ENCODE measurements at regions of chr13 and their contacts with region 1.

Region 1: DNA sequence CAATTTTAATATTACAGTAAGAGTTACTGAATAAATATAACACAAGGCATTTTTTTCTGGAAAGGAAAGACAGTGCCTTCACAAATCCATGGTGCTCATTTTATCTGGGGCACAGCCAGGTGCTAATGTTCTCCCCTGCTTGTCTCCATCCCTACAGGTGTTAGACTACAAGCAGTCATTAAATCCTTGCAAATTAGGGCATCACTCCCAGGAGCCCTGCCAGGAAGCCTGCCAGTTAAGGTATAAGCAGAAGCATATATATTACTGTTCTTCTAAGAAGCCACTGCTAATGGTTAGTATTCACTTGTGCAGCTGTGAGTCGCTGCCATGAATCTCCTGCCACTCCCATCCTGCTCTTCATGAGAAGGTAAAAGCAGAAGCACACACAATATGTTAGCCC is 149.7 kb downstream of the OXGR1 start:
- DNase-seq: no peak
- ATAC-seq: no peak
- H3K4me3 ChIP-seq: no peak overlapping the region
- H3K27ac ChIP-seq: no peak overlapping the region
- H3K4me1 ChIP-seq: no peaks in the 10 kb centered on the region
- H3K27me3 ChIP-seq: peaks cover 4% of the 10 kb centered on the region; the same call in 1 of the 2 replicates
- CTCF ChIP-seq: no peak

Region 2: DNA sequence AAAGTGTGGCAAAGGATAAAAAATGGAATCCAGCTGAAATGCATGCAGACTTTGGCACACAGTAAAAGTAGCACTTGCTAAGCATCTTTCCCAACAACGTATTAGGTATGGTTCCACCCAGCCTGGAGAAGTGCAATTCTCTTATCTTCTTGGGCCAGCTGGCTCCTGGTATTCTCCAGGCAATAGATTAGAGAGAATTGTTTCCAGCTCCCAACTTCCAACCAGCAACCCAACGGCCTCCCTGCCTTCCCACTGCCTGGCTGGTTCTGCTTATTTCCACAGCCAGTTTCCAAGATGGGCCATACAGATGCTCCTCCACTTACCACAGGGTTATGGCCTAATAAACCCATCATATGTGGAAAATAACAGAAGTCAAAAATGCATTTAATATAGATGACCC is 16.3 kb after region 1 on chr13:
- CTCF ChIA-PET with region 1: no interaction called
- POLR2A ChIA-PET with region 1: interaction called, 15 read pairs
- intact Hi-C with region 1: no loop called
- DNase-seq: no peak
- ATAC-seq: no peak
- H3K4me3 ChIP-seq: no peak overlapping the region
- H3K27ac ChIP-seq: no peak overlapping the region
- H3K4me1 ChIP-seq: no peaks in the 10 kb centered on the region
- H3K27me3 ChIP-seq: peaks cover 19% of the 10 kb centered on the region
- CTCF ChIP-seq: no peak

Region 3: GRCh38 chr13:97082461-97083207 is 238.0 kb after region 1 on chr13:
- CTCF ChIA-PET with region 1: no interaction called
- POLR2A ChIA-PET with region 1: no interaction called
- intact Hi-C with region 1: no loop called
- DNase-seq: no peak
- ATAC-seq: no peak
- H3K4me3 ChIP-seq: no peak overlapping the region
- H3K27ac ChIP-seq: no peak overlapping the region
- H3K4me1 ChIP-seq: no peaks in the 10 kb centered on the region
- H3K27me3 ChIP-seq: no peaks in the 10 kb centered on the region
- CTCF ChIP-seq: no peak